MCF 10A (cell line): ENCODE measurements at regions of chr3 and their contacts with region 1.

Region 1: DNA sequence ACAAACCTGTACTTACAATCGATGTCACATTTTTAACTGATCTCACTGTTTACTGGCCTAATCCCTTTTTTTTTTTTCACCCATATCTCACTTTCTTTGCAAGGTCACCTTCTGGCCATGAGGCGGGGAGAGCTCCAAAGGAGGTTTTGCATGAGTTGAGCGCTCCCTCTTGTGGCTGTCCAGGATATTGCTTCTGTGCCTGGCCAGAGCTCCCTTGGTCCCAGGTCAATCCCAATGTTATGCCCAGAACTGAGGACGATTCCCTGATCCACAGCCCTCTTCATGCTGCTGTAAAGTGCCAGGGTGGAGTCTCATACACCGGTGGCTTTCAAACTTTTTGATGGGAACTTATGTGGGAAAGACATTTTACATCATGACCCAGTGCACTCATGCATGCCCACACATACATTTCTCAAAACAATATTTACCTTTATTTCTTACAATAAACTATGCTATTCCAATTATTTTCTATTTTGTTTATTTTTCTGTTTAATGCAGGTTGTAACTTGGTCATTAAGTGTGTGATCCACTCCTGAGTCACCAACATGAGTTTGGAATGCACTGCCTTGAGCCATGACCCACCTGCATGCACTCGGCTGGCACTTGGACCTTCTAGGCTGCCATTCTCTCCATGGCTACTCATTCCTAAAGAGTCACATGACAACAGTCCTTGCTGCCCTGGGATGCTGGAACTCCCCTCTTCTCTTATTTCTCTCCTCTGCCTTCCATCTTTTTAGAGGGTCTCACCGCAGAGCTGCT is 9.6 kb upstream of the SST start:
- DNase-seq: peak; percentile 78
- H3K4me3 Mint-ChIP-seq: no peak overlapping the region
- H3K27ac Mint-ChIP-seq: no peak overlapping the region
- H3K4me1 Mint-ChIP-seq: no peaks in the 10 kb centered on the region
- H3K27me3 Mint-ChIP-seq: peaks cover 69% of the 10 kb centered on the region
- CTCF ChIP-seq: peak; percentile 84

Region 2: GRCh38 chr3:187112934-187113793 is 566.7 kb before region 1 on chr3:
- CTCF ChIA-PET with region 1: interaction called, 6 read pairs
- POLR2A ChIA-PET with region 1: no interaction called
- intact Hi-C with region 1: loop called (anchors 2 kb)
- DNase-seq: peak; percentile 63
- H3K4me3 Mint-ChIP-seq: no peak overlapping the region
- H3K27ac Mint-ChIP-seq: no peak overlapping the region
- H3K4me1 Mint-ChIP-seq: peaks cover 9% of the 10 kb centered on the region
- H3K27me3 Mint-ChIP-seq: no peaks in the 10 kb centered on the region
- CTCF ChIP-seq: peak; percentile 68

Region 3: DNA sequence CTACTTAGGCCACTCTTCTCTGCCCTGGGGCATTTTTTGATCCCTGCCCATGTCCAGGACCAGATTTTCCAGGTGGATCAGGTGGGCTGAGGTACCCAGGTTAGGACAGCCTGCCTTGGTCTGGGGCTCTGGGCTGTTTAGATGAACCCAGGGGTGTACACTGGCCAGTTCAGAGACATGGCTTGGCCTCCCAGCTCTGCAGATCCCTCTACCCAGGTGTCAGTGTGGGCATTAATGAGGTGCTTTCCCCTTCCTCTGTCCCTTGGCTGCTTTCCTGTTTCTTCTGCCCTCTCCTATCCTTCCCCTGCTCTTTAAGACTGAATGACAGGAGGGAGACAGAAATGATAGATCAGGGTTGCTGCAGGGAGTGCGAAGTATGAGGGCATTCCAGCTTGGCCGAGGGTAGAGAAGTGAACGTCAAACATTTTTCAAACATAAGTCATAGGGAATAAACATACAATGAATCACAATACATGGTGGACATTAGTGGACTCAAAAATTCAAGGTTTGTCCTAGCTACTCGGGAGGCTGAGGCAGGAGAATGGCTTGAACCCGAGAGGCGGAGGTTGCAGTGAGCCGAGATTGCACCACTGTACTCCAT is 452.1 kb before region 1 on chr3:
- CTCF ChIA-PET with region 1: interaction called, 111 read pairs
- POLR2A ChIA-PET with region 1: no interaction called
- intact Hi-C with region 1: no loop called
- DNase-seq: peak; percentile 45
- H3K4me3 Mint-ChIP-seq: no peak overlapping the region
- H3K27ac Mint-ChIP-seq: no peak overlapping the region
- H3K4me1 Mint-ChIP-seq: peaks cover 27% of the 10 kb centered on the region
- H3K27me3 Mint-ChIP-seq: no peaks in the 10 kb centered on the region
- CTCF ChIP-seq: no peak

Region 4: GRCh38 chr3:187490366-187490765 is 189.5 kb before region 1 on chr3:
- CTCF ChIA-PET with region 1: no interaction called
- POLR2A ChIA-PET with region 1: no interaction called
- intact Hi-C with region 1: no loop called
- DNase-seq: no peak
- H3K4me3 Mint-ChIP-seq: no peak overlapping the region
- H3K27ac Mint-ChIP-seq: no peak overlapping the region
- H3K4me1 Mint-ChIP-seq: no peaks in the 10 kb centered on the region
- H3K27me3 Mint-ChIP-seq: peaks cover 53% of the 10 kb centered on the region
- CTCF ChIP-seq: no peak

Region 5: DNA sequence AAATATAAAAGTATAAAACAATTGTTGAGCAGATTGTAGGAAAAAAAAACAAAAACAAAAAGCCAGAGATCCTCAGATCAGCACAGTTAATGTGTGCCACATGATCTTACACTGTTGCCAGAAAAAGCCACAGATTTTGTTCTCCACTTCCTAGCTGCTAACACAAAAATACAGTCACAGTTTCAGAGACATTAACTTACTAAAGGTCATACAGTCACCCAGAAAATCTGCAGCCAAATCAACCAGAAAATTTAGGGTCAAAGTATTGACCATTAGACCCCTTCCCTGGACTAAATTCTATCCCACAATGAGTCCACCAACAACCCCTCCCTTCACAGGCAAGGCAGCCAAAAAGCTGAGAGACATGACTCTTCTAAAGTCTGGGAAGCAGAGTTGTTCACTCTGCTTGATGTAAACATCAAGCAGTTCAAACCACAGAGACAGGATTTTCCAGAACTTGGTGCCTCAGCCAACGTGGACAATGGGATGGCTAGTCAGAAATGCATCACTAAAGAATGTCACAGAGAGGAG is 68.8 kb before region 1 on chr3:
- CTCF ChIA-PET with region 1: interaction called, 125 read pairs
- POLR2A ChIA-PET with region 1: interaction called, 14 read pairs
- intact Hi-C with region 1: loop called (anchors 1 kb)
- DNase-seq: no peak
- H3K4me3 Mint-ChIP-seq: no peak overlapping the region
- H3K27ac Mint-ChIP-seq: no peak overlapping the region
- H3K4me1 Mint-ChIP-seq: peaks cover 5% of the 10 kb centered on the region
- H3K27me3 Mint-ChIP-seq: peaks cover 87% of the 10 kb centered on the region
- CTCF ChIP-seq: no peak

Region 6: DNA sequence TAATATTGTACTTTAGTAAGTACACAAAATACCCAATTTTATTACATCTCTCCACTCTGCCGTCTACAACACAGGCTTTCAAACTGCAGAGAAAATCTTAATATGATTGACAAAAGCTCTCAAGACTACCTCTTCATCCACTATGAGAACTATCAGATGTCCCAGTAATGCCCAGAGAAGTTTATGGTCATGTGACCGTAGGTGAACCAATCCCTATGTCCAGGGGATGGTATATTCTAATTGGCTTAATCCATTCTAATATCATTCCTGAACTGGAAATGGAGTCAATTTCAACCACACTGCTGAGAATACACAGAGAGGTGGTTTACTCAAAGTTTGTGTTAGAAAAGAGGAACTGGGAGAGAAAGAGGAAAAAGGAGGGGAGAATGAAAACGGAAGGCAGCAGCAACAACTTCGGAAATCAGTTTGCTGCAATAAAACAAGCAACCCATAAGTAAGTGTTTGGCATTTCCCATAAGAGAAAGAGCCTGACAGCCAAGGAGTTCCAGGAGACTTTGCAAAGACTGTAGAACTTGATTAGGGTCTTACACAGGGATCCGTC is 16.9 kb before region 1 on chr3:
- CTCF ChIA-PET with region 1: interaction called, 48 read pairs
- POLR2A ChIA-PET with region 1: no interaction called
- intact Hi-C with region 1: no loop called
- DNase-seq: no peak
- H3K4me3 Mint-ChIP-seq: no peak overlapping the region
- H3K27ac Mint-ChIP-seq: no peak overlapping the region
- H3K4me1 Mint-ChIP-seq: no peaks in the 10 kb centered on the region
- H3K27me3 Mint-ChIP-seq: peaks cover 46% of the 10 kb centered on the region
- CTCF ChIP-seq: no peak

Region 7: GRCh38 chr3:187714404-187714979 is 34.7 kb after region 1 on chr3:
- CTCF ChIA-PET with region 1: interaction called, 42 read pairs
- POLR2A ChIA-PET with region 1: no interaction called
- intact Hi-C with region 1: loop called (anchors 1 kb)
- DNase-seq: peak; percentile 84
- H3K4me3 Mint-ChIP-seq: no peak overlapping the region
- H3K27ac Mint-ChIP-seq: no peak overlapping the region
- H3K4me1 Mint-ChIP-seq: peaks cover 6% of the 10 kb centered on the region
- H3K27me3 Mint-ChIP-seq: no peaks in the 10 kb centered on the region
- CTCF ChIP-seq: peak; percentile 89